ENCODE measurements at regions of chr1 and their contacts with region 1.

Region 1: DNA sequence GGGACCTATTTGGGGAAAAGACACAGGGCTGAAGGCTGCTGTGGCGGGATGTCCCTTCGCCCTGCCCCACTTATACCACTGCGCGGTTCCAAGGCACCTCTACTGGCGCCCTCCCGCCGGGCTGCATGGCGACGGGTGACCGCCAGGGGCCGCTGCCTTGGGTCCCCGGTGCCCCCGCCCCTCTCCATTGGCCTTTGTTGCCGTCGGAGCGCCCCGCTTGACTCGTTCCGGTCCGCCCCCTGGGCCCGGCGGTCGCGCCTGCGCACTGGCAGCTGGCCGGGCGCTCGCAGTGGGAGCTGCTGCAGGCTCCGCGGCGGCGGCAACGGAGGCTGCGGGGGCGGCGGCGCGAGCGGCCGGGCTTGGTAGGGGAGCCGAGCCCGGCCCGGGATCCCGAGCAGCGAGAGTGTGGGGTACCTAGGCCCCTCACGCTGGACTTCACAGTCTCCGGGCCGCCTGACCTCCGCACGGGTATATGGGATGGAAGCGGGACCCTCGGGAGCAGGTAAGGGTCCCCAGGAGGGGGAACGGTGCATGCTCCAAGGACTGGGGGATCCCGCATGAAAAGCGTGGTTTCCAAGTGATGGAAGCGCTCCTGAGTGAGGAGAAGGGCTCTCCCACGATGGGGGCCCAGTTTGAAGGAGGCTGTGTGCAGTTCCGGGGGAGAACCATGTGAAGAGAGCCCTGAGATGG is at the start of gene AGO1:
- DNase-seq: peak; percentile 94 to 99 (median 97)
- ATAC-seq: peak; percentile 99
- H3K4me3 ChIP-seq: peak within 1 kb of the TSS; percentile 99 to 100
- H3K4me3 Mint-ChIP-seq: peak within 1 kb of the TSS; percentile 92
- H3K27ac ChIP-seq: peak within 1 kb of the TSS; percentile 59 to 68
- H3K27ac Mint-ChIP-seq: peak within 1 kb of the TSS; percentile 69
- H3K4me1 ChIP-seq: peaks cover 23% of the 10 kb centered on the region
- H3K4me1 Mint-ChIP-seq: peaks cover 52% of the 10 kb centered on the region
- H3K27me3 ChIP-seq: peaks cover 0 to 3% of the 10 kb centered on the region in 2 experiments
- H3K27me3 Mint-ChIP-seq: peaks cover 3% of the 10 kb centered on the region
- CTCF ChIP-seq: peak; percentile 77
- total RNA-seq, gene AGO1: 15.8 TPM

Region 2: DNA sequence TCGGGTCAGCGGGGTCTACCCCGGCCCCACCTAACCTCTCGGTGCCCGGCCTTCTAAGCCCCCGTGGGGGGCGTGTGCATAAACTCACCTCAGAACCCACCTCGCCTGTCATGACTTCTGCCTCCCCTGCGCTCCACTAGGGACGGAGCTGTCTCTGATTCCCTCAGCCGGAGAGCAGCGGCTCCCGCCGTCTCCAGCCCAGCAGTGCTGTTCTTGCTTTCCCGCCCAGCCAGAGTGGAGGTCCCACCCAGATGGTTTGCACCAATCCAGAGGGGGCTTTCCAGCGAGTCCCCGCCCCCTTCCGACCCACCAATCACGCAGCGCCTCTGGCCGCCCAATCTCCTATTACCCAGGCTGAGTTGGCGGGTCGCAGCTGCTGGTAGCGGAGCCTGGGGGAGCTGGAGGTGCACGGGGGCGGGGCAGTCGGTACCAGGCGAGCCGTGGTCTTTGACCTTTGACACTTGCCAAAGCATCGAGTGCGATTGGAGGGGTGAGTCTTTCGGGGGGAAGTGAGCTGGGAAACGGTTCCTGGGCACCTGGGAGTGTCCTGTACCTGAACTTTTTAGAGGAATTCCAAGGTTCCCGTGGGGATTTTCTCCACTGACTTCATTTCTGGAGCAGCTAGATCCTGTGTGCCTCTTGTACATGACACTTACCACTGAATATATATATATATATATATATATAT is 113.2 kb before region 1 on chr1 and contains the start of gene CLSPN:
- CTCF ChIA-PET with region 1: no interaction called
- POLR2A ChIA-PET with region 1: no interaction called
- intact Hi-C with region 1: loop called in 1 of 2 experiments (anchors 1 kb)
- DNase-seq: peak; percentile 86 to 96 (median 93)
- ATAC-seq: peak; percentile 94
- H3K4me3 ChIP-seq: peak within 1 kb of the TSS; percentile 90 to 97
- H3K4me3 Mint-ChIP-seq: peak within 1 kb of the TSS; percentile 99
- H3K27ac ChIP-seq: peak within 1 kb of the TSS; percentile 61 to 81
- H3K27ac Mint-ChIP-seq: peak within 1 kb of the TSS; percentile 92
- H3K4me1 ChIP-seq: peaks cover 5% of the 10 kb centered on the region
- H3K4me1 Mint-ChIP-seq: peaks cover 8% of the 10 kb centered on the region
- H3K27me3 ChIP-seq: no peaks in the 10 kb centered on the region
- H3K27me3 Mint-ChIP-seq: no peaks in the 10 kb centered on the region
- CTCF ChIP-seq: no peak
- total RNA-seq, gene CLSPN: 0.41 to 0.81 TPM

Region 3: DNA sequence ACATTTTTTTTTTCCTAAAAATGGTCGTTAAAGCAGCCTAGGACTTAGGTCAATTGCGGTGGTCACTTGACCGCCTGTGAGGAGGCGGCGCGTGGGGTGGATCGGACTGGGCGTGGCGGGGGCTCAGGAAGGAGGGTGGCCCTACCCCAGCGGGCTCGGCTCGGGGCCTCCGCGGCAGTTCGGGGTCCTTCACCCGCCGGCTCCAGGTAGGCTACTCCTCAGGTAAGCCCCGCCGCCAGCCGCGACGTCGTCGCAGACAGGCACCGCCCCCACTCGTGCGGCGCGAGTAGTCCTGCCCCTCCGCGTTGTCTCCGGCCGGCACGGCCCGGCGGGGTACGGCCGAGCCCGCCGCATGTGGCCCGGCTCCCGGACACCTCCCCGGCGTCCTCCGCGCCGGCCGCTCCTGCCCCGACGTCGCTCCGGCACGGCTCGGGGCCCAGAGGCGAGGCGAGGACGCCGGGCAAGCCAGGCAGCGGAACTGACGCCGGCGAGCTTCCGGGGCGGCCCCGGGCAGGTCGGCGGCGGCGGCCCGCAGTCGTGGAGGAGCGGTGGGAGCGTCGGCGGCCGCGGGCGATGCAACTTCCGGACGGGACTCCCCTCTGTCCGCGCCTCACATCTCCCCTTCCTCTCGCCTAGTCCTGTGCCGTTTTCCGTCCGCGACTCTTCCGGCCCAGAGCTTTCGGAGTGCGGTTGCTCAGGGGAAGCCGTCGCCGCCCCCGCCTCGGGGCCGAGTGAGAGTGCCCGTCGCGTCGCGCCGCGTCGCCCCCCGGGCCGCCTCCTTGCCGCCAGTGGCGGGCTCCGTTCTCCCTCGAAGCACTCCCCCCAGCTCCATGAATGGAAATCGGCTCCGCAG is 47.7 kb after region 1 on chr1 and contains the start of gene AGO3:
- CTCF ChIA-PET with region 1: interaction called, 6 read pairs
- POLR2A ChIA-PET with region 1: interaction called, 5 read pairs
- intact Hi-C with region 1: loop called (anchors 1 kb)
- DNase-seq: peak; percentile 70 to 97 (median 84)
- ATAC-seq: peak; percentile 79
- H3K4me3 ChIP-seq: peak within 1 kb of the TSS; percentile 66 to 93
- H3K4me3 Mint-ChIP-seq: peak within 1 kb of the TSS; percentile 94
- H3K27ac ChIP-seq: peak within 1 kb of the TSS; percentile 96
- H3K27ac Mint-ChIP-seq: peak within 1 kb of the TSS; percentile 98
- H3K4me1 ChIP-seq: peaks cover 28% of the 10 kb centered on the region
- H3K4me1 Mint-ChIP-seq: peaks cover 35% of the 10 kb centered on the region
- H3K27me3 ChIP-seq: no peaks in the 10 kb centered on the region
- H3K27me3 Mint-ChIP-seq: no peaks in the 10 kb centered on the region
- CTCF ChIP-seq: no peak
- total RNA-seq, gene AGO3: 27.6 to 30.2 TPM

Region 4: DNA sequence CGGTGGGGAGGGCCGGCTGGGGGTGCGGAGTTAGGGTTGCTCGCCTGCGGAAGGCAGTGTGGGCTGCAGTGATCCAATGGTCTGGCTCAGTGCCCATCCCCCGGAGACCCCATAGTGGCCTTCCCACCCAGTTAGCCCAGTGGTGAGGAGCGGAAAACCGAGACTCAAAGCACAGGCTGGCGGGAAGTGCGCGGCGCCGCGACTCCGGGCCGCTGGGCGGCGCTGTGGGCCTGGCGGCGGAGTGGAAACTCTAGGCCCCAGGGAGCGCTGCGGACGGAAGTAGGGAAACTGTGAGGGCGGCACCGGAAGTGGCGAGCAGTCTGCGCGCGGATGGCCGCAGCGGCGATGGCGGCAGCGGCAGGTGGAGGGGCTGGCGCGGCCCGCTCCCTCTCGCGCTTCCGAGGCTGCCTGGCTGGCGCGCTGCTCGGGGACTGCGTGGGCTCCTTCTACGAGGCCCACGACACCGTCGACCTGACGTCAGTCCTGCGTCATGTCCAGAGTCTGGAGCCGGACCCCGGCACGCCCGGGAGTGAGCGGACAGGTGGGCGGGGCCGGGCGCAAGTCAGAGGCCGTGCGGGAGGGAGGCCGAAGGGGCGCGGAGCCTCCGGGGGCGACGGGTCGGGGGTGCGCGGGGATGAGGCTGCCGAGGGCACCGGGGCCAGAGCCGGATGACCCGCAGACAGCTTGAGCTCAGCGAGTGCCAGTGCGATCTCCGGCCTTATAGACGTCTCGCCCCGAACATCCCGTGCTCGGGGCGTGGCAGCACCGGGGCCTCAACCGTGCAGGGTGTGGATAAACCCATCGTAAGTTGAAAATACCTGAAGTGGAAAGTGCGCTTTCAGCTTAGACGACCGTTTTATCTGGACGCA is 205.7 kb after region 1 on chr1 and contains the start of gene ADPRS:
- CTCF ChIA-PET with region 1: no interaction called
- POLR2A ChIA-PET with region 1: interaction called, 3 read pairs
- intact Hi-C with region 1: loop called (anchors 1 kb)
- DNase-seq: peak; percentile 81 to 96 (median 91)
- ATAC-seq: peak; percentile 89
- H3K4me3 ChIP-seq: peak within 1 kb of the TSS; percentile 89 to 98
- H3K4me3 Mint-ChIP-seq: peak within 1 kb of the TSS; percentile 90
- H3K27ac ChIP-seq: peak within 1 kb of the TSS; percentile 84 to 95
- H3K27ac Mint-ChIP-seq: peak within 1 kb of the TSS; percentile 94
- H3K4me1 ChIP-seq: peaks cover 24% of the 10 kb centered on the region
- H3K4me1 Mint-ChIP-seq: peaks cover 25% of the 10 kb centered on the region
- H3K27me3 ChIP-seq: peaks cover 5 to 6% of the 10 kb centered on the region in 2 experiments
- H3K27me3 Mint-ChIP-seq: peaks cover 15% of the 10 kb centered on the region
- CTCF ChIP-seq: peak; percentile 98
- total RNA-seq, gene ADPRS: 26.2 to 26.7 TPM

Region 5: DNA sequence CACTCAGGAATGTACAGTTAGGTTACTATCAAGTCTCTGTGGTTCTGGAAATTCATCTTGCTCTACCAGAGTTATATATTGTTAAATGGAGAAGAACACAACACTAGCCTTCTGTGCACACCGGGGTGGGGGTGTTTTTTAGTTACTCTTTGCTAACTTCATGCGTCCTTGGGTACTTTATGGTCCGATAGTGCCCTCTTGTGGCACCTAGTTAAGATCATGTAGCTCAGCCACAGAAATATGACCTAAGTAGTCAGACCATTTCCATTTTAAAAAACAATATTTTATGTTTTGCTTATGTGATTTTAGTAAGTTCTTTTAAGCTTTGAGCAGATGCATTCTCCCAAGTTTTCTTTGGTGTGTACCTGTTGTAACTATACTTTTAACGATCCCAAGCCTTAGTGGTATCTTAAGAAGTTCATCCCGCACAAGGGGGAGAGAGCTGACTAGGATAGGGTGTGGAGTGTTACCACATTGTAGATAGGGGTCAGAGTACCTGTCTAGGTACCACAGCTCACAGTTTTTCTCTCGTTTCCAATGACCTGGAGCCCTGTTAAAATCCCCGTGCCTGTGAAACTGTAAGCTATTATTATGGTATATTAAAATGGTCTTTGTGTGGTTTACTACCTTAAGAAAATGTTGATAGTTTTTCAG is 402.5 kb after region 1 on chr1:
- CTCF ChIA-PET with region 1: no interaction called
- POLR2A ChIA-PET with region 1: no interaction called
- intact Hi-C with region 1: loop called in 1 of 2 experiments (anchors 10 kb)
- DNase-seq: peak; percentile 32 to 91 (median 65)
- ATAC-seq: peak; percentile 98
- H3K4me3 ChIP-seq: no peak overlapping the region
- H3K4me3 Mint-ChIP-seq: no peak overlapping the region
- H3K27ac ChIP-seq: no peak overlapping the region
- H3K27ac Mint-ChIP-seq: peak overlapping the region; percentile 9
- H3K4me1 ChIP-seq: peaks cover 4% of the 10 kb centered on the region
- H3K4me1 Mint-ChIP-seq: peaks cover 11% of the 10 kb centered on the region
- H3K27me3 ChIP-seq: no peaks in the 10 kb centered on the region
- H3K27me3 Mint-ChIP-seq: no peaks in the 10 kb centered on the region
- CTCF ChIP-seq: peak; percentile 68

Region 6: DNA sequence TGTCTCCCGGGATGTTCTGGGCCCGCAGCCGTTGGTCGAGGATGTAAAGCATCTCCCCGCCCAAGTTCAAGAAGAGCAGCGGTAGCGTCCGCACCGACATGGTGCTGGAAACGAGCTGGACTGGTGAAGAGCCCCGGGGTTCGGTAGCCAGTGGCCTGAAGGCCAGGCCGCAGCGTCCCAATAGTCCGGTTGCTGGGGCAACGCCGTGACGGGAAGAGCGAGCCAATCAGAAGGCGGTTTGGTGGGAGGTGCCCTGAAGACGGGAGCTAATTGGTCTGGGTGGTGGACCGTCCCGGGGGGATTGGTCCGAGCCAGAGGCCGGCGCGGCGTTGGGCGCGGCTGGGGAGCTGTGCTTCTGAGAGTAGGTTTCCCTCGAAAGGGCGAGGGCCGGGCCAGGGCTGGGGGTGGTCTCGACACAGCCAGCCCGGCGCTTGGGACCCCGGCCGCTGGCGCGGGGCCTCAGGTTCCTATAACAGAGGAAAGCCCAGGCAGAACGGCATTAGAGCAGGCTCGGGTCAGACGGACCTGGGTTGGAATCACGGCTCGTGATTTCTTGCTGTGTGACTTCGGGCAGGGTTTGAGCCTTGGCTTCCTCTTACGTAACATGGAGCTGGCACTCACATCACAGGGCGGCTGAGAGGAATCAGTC is 567.3 kb after region 1 on chr1 and contains the start of gene OSCP1:
- CTCF ChIA-PET with region 1: no interaction called
- POLR2A ChIA-PET with region 1: no interaction called
- intact Hi-C with region 1: loop called in 1 of 2 experiments (anchors 10 kb)
- DNase-seq: peak; percentile 74 to 94 (median 84)
- ATAC-seq: peak; percentile 97
- H3K4me3 ChIP-seq: peak within 1 kb of the TSS; percentile 74 to 76
- H3K4me3 Mint-ChIP-seq: peak within 1 kb of the TSS; percentile 95
- H3K27ac ChIP-seq: peak within 1 kb of the TSS; percentile 83 to 90
- H3K27ac Mint-ChIP-seq: peak within 1 kb of the TSS; percentile 98
- H3K4me1 ChIP-seq: peaks cover 5% of the 10 kb centered on the region
- H3K4me1 Mint-ChIP-seq: peaks cover 17% of the 10 kb centered on the region
- H3K27me3 ChIP-seq: no peaks in the 10 kb centered on the region
- H3K27me3 Mint-ChIP-seq: no peaks in the 10 kb centered on the region
- CTCF ChIP-seq: no peak
- total RNA-seq, gene OSCP1: 1.8 to 2.0 TPM

Measured in CD8-positive, alpha-beta T cell (primary cell).